ENCODE measurements at regions of chr14 and their contacts with region 1.

Region 1: DNA sequence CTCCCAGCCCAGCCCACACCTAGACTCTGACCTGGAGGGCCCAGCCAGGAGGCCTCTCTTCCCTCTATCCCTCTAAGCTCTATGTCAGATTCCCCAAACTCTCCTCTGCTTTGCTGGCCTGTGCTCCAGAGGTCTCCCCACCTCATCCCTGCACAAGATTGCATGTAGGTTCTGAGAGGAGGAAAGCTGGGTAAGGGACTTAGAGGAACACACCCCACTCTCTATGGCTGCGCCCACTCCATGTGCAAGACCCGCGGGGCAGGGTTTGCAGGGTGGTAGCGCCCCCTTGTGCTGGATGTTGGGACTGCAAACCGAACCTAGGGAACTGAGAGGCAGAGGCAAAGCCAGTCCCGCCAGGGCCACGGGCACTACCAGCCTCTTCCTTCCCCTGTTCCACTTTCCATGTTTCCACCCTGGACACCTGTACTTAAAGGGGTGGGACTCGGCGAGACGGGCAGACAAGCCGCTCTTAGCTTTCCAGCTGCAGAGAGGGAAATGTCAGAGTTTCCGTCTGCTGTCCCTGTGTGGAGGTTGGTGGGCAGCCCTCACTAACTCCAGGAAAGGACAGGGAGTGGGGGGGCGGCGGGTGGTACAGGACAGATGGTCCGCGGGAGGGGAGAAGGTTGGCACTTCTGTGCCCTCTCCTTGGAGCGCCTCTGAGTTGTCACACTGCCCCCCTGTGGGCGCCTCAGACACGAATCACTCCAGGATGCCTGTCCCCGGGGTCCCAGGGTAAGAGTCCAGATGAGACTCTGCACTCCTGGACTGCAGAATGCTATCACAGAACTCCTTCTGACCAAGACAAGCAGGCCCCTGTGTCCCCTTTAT is 16.8 kb downstream of the MMP14 start:
- DNase-seq: peak; percentile 95
- H3K4me3 Mint-ChIP-seq: peak overlapping the region; percentile 72
- H3K27ac Mint-ChIP-seq: peak overlapping the region; percentile 84
- H3K4me1 Mint-ChIP-seq: peaks cover 24% of the 10 kb centered on the region
- H3K27me3 Mint-ChIP-seq: no peaks in the 10 kb centered on the region

Region 2: GRCh38 chr14:21868442-21869046 is 984.6 kb before region 1 on chr14:
- CTCF ChIA-PET with region 1: no interaction called
- intact Hi-C with region 1: loop called (anchors 10 kb)
- DNase-seq: peak; percentile 95
- H3K4me3 Mint-ChIP-seq: peak overlapping the region; percentile 71
- H3K27ac Mint-ChIP-seq: peak overlapping the region; percentile 83
- H3K4me1 Mint-ChIP-seq: peaks cover 42% of the 10 kb centered on the region
- H3K27me3 Mint-ChIP-seq: no peaks in the 10 kb centered on the region

Region 3: GRCh38 chr14:22122227-22122818 is 730.8 kb before region 1 on chr14:
- CTCF ChIA-PET with region 1: no interaction called
- intact Hi-C with region 1: loop called (anchors 10 kb)
- DNase-seq: peak; percentile 39
- H3K4me3 Mint-ChIP-seq: peak overlapping the region; percentile 79
- H3K27ac Mint-ChIP-seq: peak overlapping the region; percentile 93
- H3K4me1 Mint-ChIP-seq: peaks cover 20% of the 10 kb centered on the region
- H3K27me3 Mint-ChIP-seq: no peaks in the 10 kb centered on the region

Region 4: GRCh38 chr14:22653012-22653621 is 200.0 kb before region 1 on chr14:
- CTCF ChIA-PET with region 1: interaction called, 63 read pairs
- intact Hi-C with region 1: loop called (anchors 1 kb)
- DNase-seq: peak; percentile 78
- H3K4me3 Mint-ChIP-seq: no peak overlapping the region
- H3K27ac Mint-ChIP-seq: no peak overlapping the region
- H3K4me1 Mint-ChIP-seq: no peaks in the 10 kb centered on the region
- H3K27me3 Mint-ChIP-seq: no peaks in the 10 kb centered on the region

Region 5: DNA sequence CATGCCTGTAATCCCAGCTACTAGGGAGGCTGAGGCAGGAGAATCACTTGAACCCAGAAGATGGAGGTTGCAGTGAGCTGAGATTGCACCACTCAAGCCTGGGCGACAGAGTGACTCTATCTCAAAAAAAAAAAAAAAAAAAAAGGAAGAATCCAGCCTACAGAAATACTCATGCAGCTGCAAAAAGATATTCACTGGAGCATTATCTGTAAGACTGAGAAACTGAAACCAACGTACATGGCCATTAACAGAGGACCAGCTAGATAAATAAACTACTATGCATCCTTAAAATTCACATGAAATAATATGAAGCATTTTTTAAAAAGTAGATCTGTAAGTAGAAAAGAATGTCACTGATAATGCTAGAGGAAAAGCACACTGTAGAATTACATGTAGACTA is 41.4 kb before region 1 on chr14:
- CTCF ChIA-PET with region 1: interaction called, 11 read pairs
- intact Hi-C with region 1: no loop called
- DNase-seq: no peak
- H3K4me3 Mint-ChIP-seq: no peak overlapping the region
- H3K27ac Mint-ChIP-seq: no peak overlapping the region
- H3K4me1 Mint-ChIP-seq: peaks cover 11% of the 10 kb centered on the region
- H3K27me3 Mint-ChIP-seq: no peaks in the 10 kb centered on the region

Region 6: GRCh38 chr14:22836301-22837113 is 16.6 kb before region 1 on chr14 and contains the start of gene MMP14:
- CTCF ChIA-PET with region 1: interaction called, 105 read pairs
- intact Hi-C with region 1: no loop called
- DNase-seq: no peak
- H3K4me3 Mint-ChIP-seq: peak within 1 kb of the TSS; percentile 78
- H3K27ac Mint-ChIP-seq: no peak within 1 kb of the TSS
- H3K4me1 Mint-ChIP-seq: peaks cover 19% of the 10 kb centered on the region
- H3K27me3 Mint-ChIP-seq: peaks cover 4% of the 10 kb centered on the region
- total RNA-seq, gene MMP14: 1.3 to 2.1 TPM

Region 7: DNA sequence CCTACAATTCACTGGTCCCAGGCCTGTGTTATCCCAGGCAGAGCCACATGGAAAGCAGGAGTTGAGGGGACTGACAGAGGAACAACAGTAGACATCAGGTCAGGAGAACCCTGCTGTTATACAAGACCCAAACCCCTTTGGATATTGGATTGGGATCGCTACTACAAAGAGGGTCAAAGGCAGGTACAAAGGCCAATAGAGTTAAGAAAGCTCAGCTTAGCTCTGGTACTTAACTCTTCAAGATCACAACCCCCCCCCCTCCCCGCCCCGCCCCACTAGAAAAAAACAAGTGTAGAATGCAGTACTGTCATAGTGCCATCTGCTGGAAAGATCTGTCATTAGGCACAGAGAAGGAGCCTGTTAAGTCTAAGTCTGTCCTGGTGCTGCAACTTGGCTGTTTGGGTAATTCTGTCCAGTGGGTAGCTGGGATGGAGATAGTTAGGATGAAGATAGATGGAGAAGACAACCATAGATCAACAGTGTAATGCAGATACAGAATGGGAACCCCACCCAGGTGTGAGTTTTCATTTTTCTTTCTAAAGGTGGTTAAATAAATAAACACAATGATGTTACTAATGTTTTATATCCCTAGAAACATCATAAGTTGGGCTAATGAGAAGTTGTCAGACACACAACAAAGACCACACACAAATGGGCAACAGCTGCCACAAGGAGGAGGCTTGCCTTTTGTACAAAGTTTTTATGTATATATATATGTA is 47.1 kb after region 1 on chr14:
- CTCF ChIA-PET with region 1: interaction called, 14 read pairs
- intact Hi-C with region 1: loop called (anchors 1 kb)
- DNase-seq: peak; percentile 64
- H3K4me3 Mint-ChIP-seq: no peak overlapping the region
- H3K27ac Mint-ChIP-seq: no peak overlapping the region
- H3K4me1 Mint-ChIP-seq: peaks cover 12% of the 10 kb centered on the region
- H3K27me3 Mint-ChIP-seq: no peaks in the 10 kb centered on the region

Region 8: GRCh38 chr14:23275412-23275811 is 422.3 kb after region 1 on chr14:
- CTCF ChIA-PET with region 1: no interaction called
- intact Hi-C with region 1: no loop called
- DNase-seq: no peak
- H3K4me3 Mint-ChIP-seq: no peak overlapping the region
- H3K27ac Mint-ChIP-seq: peak overlapping the region; percentile 6
- H3K4me1 Mint-ChIP-seq: peaks cover 2% of the 10 kb centered on the region
- H3K27me3 Mint-ChIP-seq: no peaks in the 10 kb centered on the region